Caco-2 (cell line): ENCODE measurements at regions of chr10 and their contacts with region 1.

Region 1: DNA sequence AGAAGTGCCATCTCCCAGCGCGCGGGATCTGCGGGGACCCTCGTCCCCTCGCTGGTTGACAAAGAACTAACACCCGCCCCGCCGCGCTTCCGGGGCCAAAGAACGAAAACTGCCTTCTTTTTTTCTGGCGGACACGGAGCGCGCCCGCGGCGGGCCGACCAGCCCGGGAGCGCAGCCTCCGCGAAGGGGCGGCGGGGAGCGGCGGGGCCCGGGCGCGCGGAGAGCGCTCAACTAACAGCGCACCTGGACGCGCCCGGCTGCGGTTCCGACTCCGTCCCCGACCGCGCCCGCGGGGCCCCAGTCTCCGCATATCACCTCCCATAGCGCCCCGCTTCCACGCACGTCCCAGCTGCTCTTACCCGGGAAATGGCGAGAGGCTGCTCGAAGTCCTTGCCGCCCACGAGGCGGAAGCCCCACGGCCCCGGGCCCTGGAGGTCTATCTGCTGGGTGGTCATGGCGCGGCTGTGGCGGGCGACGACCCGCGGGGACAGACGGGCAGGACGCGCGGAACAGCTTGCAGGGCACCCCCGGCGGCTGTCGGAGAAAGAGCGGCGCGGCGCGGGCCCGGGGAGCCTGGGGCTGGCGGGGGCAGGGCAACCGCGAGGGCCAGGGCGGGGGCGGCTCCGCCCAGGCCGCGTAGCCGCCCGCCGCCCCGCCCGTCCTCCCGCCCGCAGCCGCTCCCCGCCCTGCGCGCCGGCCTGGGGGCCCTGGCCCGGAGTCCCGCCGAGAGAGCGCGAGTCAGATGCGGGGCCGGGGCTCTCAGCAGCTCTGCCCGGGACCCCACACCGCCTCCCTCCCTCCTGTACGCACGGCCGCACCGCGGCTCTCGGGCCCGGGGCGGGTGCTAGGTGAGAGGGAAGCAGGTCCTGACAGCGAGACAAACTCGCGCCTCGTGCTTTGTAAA is at the start of gene PDLIM1:
- DNase-seq: peak; percentile 78 to 88
- H3K4me3 ChIP-seq: peak within 1 kb of the TSS; percentile 89
- H3K4me3 Mint-ChIP-seq: peak within 1 kb of the TSS; percentile 82
- H3K27ac Mint-ChIP-seq: peak within 1 kb of the TSS; percentile 87
- H3K4me1 ChIP-seq: peaks cover 43% of the 10 kb centered on the region
- H3K4me1 Mint-ChIP-seq: peaks cover 27% of the 10 kb centered on the region
- H3K27me3 ChIP-seq: no peaks in the 10 kb centered on the region
- H3K27me3 Mint-ChIP-seq: no peaks in the 10 kb centered on the region
- CTCF ChIP-seq: no peak
- total RNA-seq, gene PDLIM1: 417 and 506 TPM in 2 replicates

Region 2: GRCh38 chr10:95266674-95267095 is 24.0 kb before region 1 on chr10:
- CTCF ChIA-PET with region 1: interaction called, 4 read pairs
- POLR2A ChIA-PET with region 1: no interaction called
- intact Hi-C with region 1: loop called (anchors 1 kb)
- DNase-seq: peak; percentile 68 to 83
- H3K4me3 ChIP-seq: no peak overlapping the region
- H3K4me3 Mint-ChIP-seq: peak overlapping the region; percentile 63
- H3K27ac Mint-ChIP-seq: peak overlapping the region; percentile 98
- H3K4me1 ChIP-seq: peaks cover 71% of the 10 kb centered on the region
- H3K4me1 Mint-ChIP-seq: peaks cover 58% of the 10 kb centered on the region
- H3K27me3 ChIP-seq: no peaks in the 10 kb centered on the region
- H3K27me3 Mint-ChIP-seq: no peaks in the 10 kb centered on the region
- CTCF ChIP-seq: no peak

Region 3: DNA sequence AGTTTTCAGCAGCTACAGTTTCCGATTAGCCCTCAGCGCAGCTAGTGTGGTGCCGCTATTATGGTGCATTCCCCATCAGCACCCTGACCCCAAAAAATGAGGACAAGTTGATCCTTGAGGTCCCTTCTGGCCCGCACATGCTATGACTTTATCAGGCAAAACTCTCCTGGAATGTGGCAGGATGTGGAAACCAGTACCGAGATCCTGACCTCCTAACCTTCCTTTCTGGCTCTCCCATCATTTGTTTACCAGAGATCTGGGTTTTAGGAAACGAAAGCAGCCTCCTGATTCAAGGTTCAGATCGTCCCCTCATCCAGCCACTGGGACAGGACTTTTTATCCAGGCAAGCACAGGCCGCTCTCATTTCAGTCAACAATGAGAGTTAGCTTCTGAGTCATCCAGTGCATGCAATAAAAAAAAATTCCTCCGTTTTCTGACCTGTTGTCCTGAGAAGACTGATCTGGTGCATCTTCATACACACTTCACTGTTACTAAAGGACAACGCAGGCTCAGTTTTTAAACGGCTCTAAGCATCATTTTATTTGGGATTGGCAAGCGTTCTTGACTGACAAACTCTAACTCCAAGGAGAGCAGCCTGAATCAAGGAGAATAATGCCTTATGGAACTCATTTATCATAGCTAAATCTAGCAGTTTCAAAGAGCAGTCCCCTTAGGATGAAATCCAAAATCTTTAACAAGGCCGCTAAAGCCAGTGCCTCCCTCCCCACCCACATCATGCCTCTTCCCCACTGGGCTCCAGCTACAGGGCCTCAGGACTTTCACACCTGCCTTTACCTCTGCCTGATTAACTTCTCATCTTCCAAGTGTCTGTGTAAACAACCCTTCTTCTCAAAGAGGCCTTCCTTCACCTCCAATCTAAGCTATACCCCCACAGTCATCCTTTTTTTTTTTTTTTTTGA is 17.1 kb before region 1 on chr10:
- CTCF ChIA-PET with region 1: interaction called, 6 read pairs
- POLR2A ChIA-PET with region 1: interaction called, 12 read pairs
- intact Hi-C with region 1: loop called (anchors 1 kb)
- DNase-seq: peak; percentile 78 to 84
- H3K4me3 ChIP-seq: no peak overlapping the region
- H3K4me3 Mint-ChIP-seq: peak overlapping the region; percentile 54
- H3K27ac Mint-ChIP-seq: peak overlapping the region; percentile 91
- H3K4me1 ChIP-seq: peaks cover 67% of the 10 kb centered on the region
- H3K4me1 Mint-ChIP-seq: peaks cover 59% of the 10 kb centered on the region
- H3K27me3 ChIP-seq: no peaks in the 10 kb centered on the region
- H3K27me3 Mint-ChIP-seq: no peaks in the 10 kb centered on the region
- CTCF ChIP-seq: no peak